Activated T-helper 1 cell treated with anti-CD3 and anti-CD28 coated beads, Interleukin-12 subunit alpha, Interleukin-12 subunit beta, Interleukin-2, Interleukin-4 antibody, amounts not matched to agents 30 ng/mL and 10 ng/mL and 1 ng/mL, durations not matched to agents 14 hours and 24 hours and 36 hours (primary cell): ENCODE measurements at regions of chr11 and their contacts with region 1.

Region 1: GRCh38 chr11:64240394-64241174 is at the start of gene FKBP2:
- DNase-seq: peak; percentile 99
- H3K4me3 Mint-ChIP-seq: peak within 1 kb of the TSS; percentile 94
- H3K27ac Mint-ChIP-seq: peak within 1 kb of the TSS; percentile 94
- H3K4me1 Mint-ChIP-seq: peaks cover 36% of the 10 kb centered on the region
- H3K27me3 Mint-ChIP-seq: no peaks in the 10 kb centered on the region
- total RNA-seq, gene FKBP2: 32.6 and 34.3 TPM in 2 replicates

Region 2: GRCh38 chr11:64204464-64204989 is 36.1 kb before region 1 on chr11:
- intact Hi-C with region 1: loop called (anchors 2 kb)
- DNase-seq: peak; percentile 61
- H3K4me3 Mint-ChIP-seq: peak overlapping the region; percentile 78
- H3K27ac Mint-ChIP-seq: peak overlapping the region; percentile 70
- H3K4me1 Mint-ChIP-seq: peaks cover 39% of the 10 kb centered on the region
- H3K27me3 Mint-ChIP-seq: no peaks in the 10 kb centered on the region

Region 3: DNA sequence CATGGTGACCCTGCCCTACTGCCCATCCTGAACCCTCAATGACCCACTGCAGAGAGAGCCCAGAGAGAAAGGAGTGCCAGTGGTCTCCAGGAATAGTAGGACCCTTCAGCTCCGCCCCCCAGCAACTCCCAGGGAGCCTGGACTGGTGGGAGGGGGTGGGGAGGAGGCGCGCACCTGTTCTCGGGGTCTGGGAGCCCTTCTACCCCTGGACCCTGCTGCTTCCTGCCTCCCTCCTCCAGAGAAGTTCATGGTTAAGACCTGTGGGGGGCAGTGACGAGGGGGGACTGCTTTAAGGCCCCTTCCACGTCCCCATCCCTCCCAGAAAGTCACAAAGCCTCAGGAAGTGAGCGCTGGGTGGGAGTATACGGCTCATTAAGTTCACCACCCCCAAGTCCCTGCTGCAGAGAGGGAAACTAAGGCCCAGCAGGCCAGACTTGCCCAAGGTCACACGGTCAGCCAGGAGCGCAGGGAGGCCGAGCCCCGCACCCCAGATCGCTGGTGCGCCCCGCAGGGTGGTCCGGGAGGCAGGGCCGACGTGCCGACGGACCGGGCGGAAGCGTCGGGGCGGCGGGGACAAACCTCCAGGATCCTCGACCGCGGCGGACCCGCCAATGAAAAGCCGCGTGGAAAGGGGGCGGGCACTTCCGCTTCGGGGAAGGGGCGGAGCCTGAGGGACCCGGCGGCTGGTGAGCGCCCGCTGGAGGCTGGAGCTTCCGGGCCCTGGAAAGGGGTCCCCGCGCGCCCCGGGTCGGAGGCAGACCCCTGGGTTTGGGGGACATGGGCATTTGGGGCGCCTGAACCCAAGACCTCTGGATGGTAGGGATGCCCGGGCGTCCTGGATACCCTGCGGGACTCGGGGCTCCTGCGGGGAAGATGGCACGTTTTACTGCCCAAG is 14.7 kb before region 1 on chr11 and contains the starts of genes NUDT22 and TRPT1:
- intact Hi-C with region 1: loop called (anchors 1 kb)
- DNase-seq: peak; percentile 92
- H3K4me3 Mint-ChIP-seq: peak within 1 kb of the TSS; percentile 87
- H3K27ac Mint-ChIP-seq: peak within 1 kb of the TSS; percentile 80
- H3K4me1 Mint-ChIP-seq: peaks cover 27% of the 10 kb centered on the region
- H3K27me3 Mint-ChIP-seq: no peaks in the 10 kb centered on the region
- total RNA-seq, gene NUDT22: 74.9 and 79.4 TPM in 2 replicates
- total RNA-seq, gene TRPT1: 30.3 and 35.5 TPM in 2 replicates

Region 4: GRCh38 chr11:64269380-64270234 is 29.0 kb after region 1 on chr11:
- intact Hi-C with region 1: loop called (anchors 1 kb)
- DNase-seq: peak; percentile 98
- H3K4me3 Mint-ChIP-seq: peak overlapping the region; percentile 89
- H3K27ac Mint-ChIP-seq: peak overlapping the region; percentile 97
- H3K4me1 Mint-ChIP-seq: peaks cover 31% of the 10 kb centered on the region
- H3K27me3 Mint-ChIP-seq: no peaks in the 10 kb centered on the region

Region 5: GRCh38 chr11:64284048-64284961 is 43.7 kb after region 1 on chr11 and contains the start of gene BAD:
- intact Hi-C with region 1: loop called (anchors 1 kb)
- DNase-seq: peak; percentile 91
- H3K4me3 Mint-ChIP-seq: peak within 1 kb of the TSS; percentile 87
- H3K27ac Mint-ChIP-seq: peak within 1 kb of the TSS; percentile 95
- H3K4me1 Mint-ChIP-seq: peaks cover 30% of the 10 kb centered on the region
- H3K27me3 Mint-ChIP-seq: peaks cover 1% of the 10 kb centered on the region
- total RNA-seq, gene BAD: 30.1 and 38.0 TPM in 2 replicates

Region 6: DNA sequence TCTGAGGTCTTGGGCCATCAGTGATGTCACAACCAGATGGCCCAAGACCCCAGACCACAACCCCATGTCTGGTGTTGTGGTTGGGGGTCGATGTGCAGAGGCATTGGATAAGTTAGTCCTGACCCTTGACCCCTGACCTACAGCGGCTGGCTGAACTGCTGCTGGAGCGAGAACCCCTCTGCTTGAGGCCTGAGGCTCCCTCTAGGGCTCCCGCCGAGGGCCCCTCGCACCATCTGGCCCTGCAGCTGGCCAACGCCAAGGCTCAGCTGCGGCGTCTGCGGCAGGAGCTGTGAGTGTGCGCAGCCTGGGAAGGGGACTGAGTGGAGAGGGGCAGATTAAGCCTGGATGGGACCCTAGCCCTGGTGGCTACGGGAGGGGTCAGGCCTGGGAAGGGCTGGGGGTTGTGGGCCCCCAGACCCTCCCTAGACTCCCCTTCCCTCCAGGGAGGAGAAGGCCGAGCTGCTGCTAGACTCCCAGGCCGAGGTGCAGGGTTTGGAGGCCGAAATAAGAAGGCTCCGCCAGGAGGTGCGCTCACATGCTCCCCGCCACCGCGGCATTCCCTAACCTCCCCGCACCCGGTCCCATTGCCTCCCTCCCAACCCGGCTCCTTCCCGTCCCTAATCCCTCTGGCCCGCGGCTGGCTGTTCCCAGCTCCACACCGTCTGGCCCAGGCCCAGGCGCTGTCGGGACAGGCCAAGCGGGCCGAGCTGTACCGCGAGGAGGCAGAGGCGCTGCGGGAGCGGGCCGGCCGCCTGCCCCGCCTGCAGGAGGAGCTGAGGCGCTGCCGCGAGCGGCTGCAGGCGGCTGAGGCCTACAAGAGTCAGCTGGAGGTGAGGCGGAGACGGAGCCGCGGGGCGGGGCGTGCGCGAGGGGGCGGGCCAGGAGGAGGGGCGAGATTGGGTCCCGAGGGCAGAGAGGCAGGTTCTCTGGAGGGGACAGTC is 101.5 kb after region 1 on chr11:
- intact Hi-C with region 1: loop called (anchors 1 kb)
- DNase-seq: peak; percentile 91
- H3K4me3 Mint-ChIP-seq: peak overlapping the region; percentile 39
- H3K27ac Mint-ChIP-seq: no peak overlapping the region
- H3K4me1 Mint-ChIP-seq: peaks cover 32% of the 10 kb centered on the region
- H3K27me3 Mint-ChIP-seq: no peaks in the 10 kb centered on the region

Region 7: DNA sequence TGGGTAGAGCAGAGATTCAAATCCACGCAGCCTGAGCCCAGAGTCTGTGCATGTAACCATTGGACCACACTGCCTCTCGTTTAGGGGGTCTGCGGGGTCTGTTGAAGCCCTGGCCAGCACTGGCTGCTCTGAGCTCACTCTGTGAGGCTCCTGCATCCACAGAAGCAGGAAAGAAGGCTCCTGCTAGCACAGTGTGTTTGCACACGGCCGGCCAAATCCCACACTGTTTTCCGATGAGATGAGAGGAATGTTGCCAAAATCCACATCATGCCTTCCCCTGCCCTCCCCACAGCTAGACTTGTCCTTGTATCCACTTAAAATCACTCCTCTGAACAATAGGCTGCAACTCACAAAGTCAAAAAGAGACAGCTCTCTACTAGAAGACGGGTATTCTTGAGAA is 339.8 kb after region 1 on chr11:
- intact Hi-C with region 1: no loop called
- DNase-seq: no peak
- H3K4me3 Mint-ChIP-seq: no peak overlapping the region
- H3K27ac Mint-ChIP-seq: no peak overlapping the region
- H3K4me1 Mint-ChIP-seq: no peaks in the 10 kb centered on the region
- H3K27me3 Mint-ChIP-seq: peaks cover 3% of the 10 kb centered on the region